ENCODE measurements at regions of chr1 and their contacts with region 1.

Region 1: DNA sequence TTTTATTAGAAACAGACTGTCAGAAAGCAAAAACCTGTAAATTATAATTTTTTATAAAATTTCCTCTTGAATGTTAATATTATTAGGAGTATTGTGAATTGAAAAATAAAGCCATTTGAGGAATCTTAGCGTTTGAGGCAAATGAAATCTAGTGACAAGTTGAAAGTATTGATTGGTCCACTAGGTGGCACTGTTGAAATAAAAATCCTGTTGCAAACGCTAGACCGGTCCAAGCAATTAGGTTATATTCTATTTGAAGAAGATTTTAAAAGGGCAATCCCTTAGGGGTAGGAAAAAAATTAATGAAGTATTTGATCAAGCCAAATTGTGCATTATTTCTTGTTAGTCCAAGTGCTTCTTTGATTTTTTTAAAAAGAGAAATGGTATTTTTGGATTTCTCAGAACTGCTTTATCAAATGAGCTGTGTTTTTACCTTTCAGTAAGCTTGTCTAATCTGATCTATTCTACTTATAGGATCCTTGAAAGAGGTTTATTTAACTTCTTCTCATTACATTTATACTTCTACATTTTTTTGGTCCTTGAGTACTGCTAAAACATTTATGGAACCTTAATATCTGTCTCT is 57.7 kb downstream of the ATG4C start:
- DNase-seq: peak; percentile 15
- ATAC-seq: peak; percentile 85
- H3K4me3 ChIP-seq: no peak overlapping the region
- H3K27ac ChIP-seq: no peak overlapping the region
- H3K4me1 ChIP-seq: no peaks in the 10 kb centered on the region
- H3K27me3 ChIP-seq: no peaks in the 10 kb centered on the region
- CTCF ChIP-seq: peak; percentile 36 to 62 (median 55); a peak in 5 of 6 replicates
- EP300 ChIP-seq: no peak
- POLR2A ChIP-seq: no peak
- RAD21 ChIP-seq: peak; percentile 70

Region 2: DNA sequence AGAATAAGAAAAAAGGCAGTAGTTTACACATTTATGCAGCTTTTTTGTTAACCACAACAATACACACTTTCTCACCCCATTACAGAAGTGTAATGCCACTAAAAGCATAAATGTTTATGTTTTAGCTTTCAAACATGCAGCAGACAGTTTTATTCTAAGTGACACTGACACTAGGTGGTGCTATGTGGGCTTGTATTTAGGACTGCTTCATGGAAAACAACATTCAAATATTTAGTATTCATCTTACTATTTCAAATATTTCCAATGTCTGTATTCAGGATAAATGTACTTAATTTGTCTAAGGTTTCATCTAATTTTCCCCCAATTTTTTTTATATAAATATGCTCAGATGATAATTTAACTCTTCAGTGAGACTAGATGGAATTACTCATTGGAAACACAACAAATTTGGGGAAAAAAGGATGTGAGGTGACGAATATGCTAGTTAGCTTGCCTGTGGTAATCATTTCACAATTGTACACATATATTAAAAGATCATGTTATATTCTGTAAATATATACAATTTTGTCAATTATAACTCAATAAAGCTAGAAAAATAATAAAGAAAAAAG is 333.4 kb before region 1 on chr1:
- CTCF ChIA-PET with region 1: interaction called, 3 read pairs
- POLR2A ChIA-PET with region 1: no interaction called
- RAD21 ChIA-PET with region 1: interaction called, 3 read pairs
- SMC1A ChIA-PET with region 1: interaction called, 4 read pairs
- in situ Hi-C with region 1: no loop called
- intact Hi-C with region 1: loop called (anchors 10 kb)
- DNase-seq: peak; percentile 9
- ATAC-seq: peak; percentile 68
- H3K4me3 ChIP-seq: no peak overlapping the region
- H3K27ac ChIP-seq: no peak overlapping the region
- H3K4me1 ChIP-seq: no peaks in the 10 kb centered on the region
- H3K27me3 ChIP-seq: no peaks in the 10 kb centered on the region
- CTCF ChIP-seq: peak; percentile 58 to 68 (median 60)
- EP300 ChIP-seq: no peak
- POLR2A ChIP-seq: no peak
- RAD21 ChIP-seq: peak; percentile 88

Region 3: GRCh38 chr1:62810420-62811274 is 31.0 kb before region 1 on chr1:
- CTCF ChIA-PET with region 1: interaction called, 10 read pairs
- POLR2A ChIA-PET with region 1: no interaction called
- RAD21 ChIA-PET with region 1: interaction called, 4 read pairs
- SMC1A ChIA-PET with region 1: interaction called, 6 read pairs
- in situ Hi-C with region 1: no loop called
- intact Hi-C with region 1: no loop called
- DNase-seq: peak; percentile 59
- ATAC-seq: peak; percentile 97
- H3K4me3 ChIP-seq: no peak overlapping the region
- H3K27ac ChIP-seq: peak overlapping the region; percentile 66; the same call in 1 of the 2 replicates
- H3K4me1 ChIP-seq: peaks cover 10% of the 10 kb centered on the region
- H3K27me3 ChIP-seq: no peaks in the 10 kb centered on the region
- CTCF ChIP-seq: no peak
- EP300 ChIP-seq: peak; percentile 18 to 94; a peak in 3 of 4 replicates
- POLR2A ChIP-seq: no peak
- RAD21 ChIP-seq: no peak

Region 4: DNA sequence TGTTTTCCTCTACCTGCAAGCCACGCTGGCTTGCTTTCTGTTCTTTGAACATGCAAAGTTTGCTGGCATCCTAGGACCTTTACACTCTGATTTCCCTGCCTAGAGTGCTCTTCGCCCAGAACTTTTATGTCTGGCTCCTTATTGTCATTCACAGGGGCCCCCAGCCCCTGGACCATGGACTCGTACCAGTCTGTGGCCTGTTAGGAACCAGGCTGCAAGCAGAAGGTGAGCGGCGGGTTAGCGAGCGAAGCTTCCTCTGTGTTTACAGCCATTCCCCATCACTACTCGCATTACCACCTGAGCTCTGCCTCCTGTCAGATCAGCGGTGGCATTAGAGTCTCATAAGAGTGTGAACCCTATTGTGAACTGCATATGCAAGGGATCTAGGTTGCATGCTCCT is 15.3 kb after region 1 on chr1:
- CTCF ChIA-PET with region 1: interaction called, 49 read pairs
- POLR2A ChIA-PET with region 1: no interaction called
- RAD21 ChIA-PET with region 1: interaction called, 3 read pairs
- SMC1A ChIA-PET with region 1: interaction called, 9 read pairs
- in situ Hi-C with region 1: no loop called
- intact Hi-C with region 1: no loop called
- DNase-seq: no peak
- ATAC-seq: no peak
- H3K4me3 ChIP-seq: no peak overlapping the region
- H3K27ac ChIP-seq: no peak overlapping the region
- H3K4me1 ChIP-seq: no peaks in the 10 kb centered on the region
- H3K27me3 ChIP-seq: no peaks in the 10 kb centered on the region
- CTCF ChIP-seq: no peak
- EP300 ChIP-seq: no peak
- POLR2A ChIP-seq: no peak
- RAD21 ChIP-seq: no peak

Region 5: DNA sequence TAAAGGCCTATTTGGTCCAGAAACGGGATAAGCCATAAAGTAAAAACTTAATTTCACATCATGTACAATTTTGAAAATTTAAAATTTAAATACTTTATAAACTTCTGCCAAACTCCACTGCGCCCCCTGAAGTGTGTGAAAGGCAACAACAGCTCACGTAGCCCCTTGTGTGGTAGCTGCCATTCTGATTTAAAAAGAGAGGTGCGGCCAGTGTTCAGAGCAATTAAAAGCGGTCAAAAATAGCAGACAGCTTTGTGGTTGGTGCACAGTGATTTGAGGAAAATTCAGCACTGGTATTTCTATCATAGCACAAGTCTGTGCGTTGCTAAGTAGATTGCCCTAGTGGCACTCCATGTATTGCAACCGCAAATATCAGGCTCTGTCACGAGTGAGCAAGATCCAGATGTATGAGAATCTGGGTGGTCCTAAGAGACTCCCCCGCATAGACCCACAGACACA is 64.8 kb after region 1 on chr1:
- CTCF ChIA-PET with region 1: interaction called, 18 read pairs
- POLR2A ChIA-PET with region 1: interaction called, 3 read pairs
- RAD21 ChIA-PET with region 1: interaction called, 6 read pairs
- SMC1A ChIA-PET with region 1: interaction called, 10 read pairs
- in situ Hi-C with region 1: no loop called
- intact Hi-C with region 1: no loop called
- DNase-seq: no peak
- ATAC-seq: peak; percentile 31; the same call in 2 of the 3 replicates
- H3K4me3 ChIP-seq: no peak overlapping the region
- H3K27ac ChIP-seq: no peak overlapping the region
- H3K4me1 ChIP-seq: no peaks in the 10 kb centered on the region
- H3K27me3 ChIP-seq: no peaks in the 10 kb centered on the region
- CTCF ChIP-seq: peak; percentile 20 to 44 (median 38); a peak in 4 of 6 replicates
- EP300 ChIP-seq: no peak
- POLR2A ChIP-seq: no peak
- RAD21 ChIP-seq: no peak

Region 6: GRCh38 chr1:63537940-63538339 is 696.3 kb after region 1 on chr1:
- CTCF ChIA-PET with region 1: interaction called, 18 read pairs
- POLR2A ChIA-PET with region 1: no interaction called
- RAD21 ChIA-PET with region 1: interaction called, 5 read pairs
- SMC1A ChIA-PET with region 1: interaction called, 6 read pairs
- in situ Hi-C with region 1: no loop called
- intact Hi-C with region 1: no loop called
- DNase-seq: no peak
- ATAC-seq: no peak
- H3K4me3 ChIP-seq: no peak overlapping the region
- H3K27ac ChIP-seq: no peak overlapping the region
- H3K4me1 ChIP-seq: no peaks in the 10 kb centered on the region
- H3K27me3 ChIP-seq: no peaks in the 10 kb centered on the region
- CTCF ChIP-seq: peak in 1 of 3 experiments; percentile 21; a peak in 2 of 6 replicates
- EP300 ChIP-seq: no peak
- POLR2A ChIP-seq: no peak
- RAD21 ChIP-seq: peak; percentile 38

Measured in GM12878 (cell line).